ENCODE measurements at regions of chr14 and their contacts with region 1.

Region 1: DNA sequence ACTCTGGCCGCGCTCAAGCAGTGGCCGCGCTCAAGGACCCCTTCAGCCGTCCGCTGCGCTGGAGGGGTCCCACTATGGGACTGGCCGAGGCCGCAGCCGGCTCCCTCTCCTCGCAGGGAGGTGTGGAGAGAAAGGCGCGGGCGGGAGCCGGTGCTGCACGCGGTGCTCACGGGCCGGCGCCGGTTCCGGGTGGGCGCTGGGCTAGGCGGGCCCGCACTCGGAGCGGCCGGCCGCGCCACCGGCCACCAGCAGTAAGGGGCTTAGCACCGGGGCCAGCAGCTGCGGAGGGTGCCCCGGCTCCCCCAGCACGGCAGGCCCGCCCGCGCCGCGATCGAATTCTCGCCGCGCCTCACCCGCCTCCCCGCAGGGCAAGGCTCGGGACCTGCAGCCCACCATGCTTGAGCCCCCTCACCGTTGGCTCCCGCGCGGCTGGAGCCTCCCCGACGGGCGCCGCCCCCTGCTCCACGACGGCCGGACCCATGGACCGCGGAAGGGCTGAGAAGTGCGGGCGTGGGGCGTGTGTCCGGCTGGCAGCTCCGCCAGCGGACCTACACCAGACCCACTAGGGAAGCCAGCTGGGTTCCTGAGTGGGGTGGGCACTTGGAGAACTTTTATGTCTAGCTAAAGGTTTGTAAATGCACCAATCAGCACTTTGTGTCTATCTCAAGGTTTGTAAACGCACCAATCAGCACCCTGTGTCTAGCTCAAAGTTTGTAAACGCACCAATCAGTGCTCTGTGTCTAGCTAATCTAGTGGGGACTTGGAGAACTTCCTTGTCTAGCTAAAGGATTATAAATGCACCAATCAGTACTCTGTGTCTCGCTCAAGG is 49.5 kb downstream of the KLHL28 start:
- DNase-seq: no peak
- H3K4me3 ChIP-seq: peak overlapping the region in 2 of 3 experiments; percentile 34 to 35
- H3K27ac ChIP-seq: no peak overlapping the region
- H3K4me1 ChIP-seq: no peaks in the 10 kb centered on the region
- H3K27me3 ChIP-seq: peaks cover 3% of the 10 kb centered on the region
- CTCF ChIP-seq: no peak

Region 2: GRCh38 chr14:44803239-44803905 is 108.9 kb before region 1 on chr14:
- CTCF ChIA-PET with region 1: no interaction called
- dilution Hi-C with region 1: no loop called
- in situ Hi-C with region 1: no loop called
- intact Hi-C with region 1: no loop called
- DNase-seq: peak; percentile 46
- H3K4me3 ChIP-seq: no peak overlapping the region
- H3K27ac ChIP-seq: no peak overlapping the region
- H3K4me1 ChIP-seq: no peaks in the 10 kb centered on the region
- H3K27me3 ChIP-seq: no peaks in the 10 kb centered on the region
- CTCF ChIP-seq: peak; percentile 45 to 71

Region 3: GRCh38 chr14:45028107-45028626 is 115.9 kb after region 1 on chr14:
- CTCF ChIA-PET with region 1: no interaction called
- dilution Hi-C with region 1: no loop called
- in situ Hi-C with region 1: no loop called
- intact Hi-C with region 1: no loop called
- DNase-seq: no peak
- H3K4me3 ChIP-seq: no peak overlapping the region
- H3K27ac ChIP-seq: no peak overlapping the region
- H3K4me1 ChIP-seq: no peaks in the 10 kb centered on the region
- H3K27me3 ChIP-seq: no peaks in the 10 kb centered on the region
- CTCF ChIP-seq: no peak

Region 4: GRCh38 chr14:45134051-45134958 is 222.1 kb after region 1 on chr14 and contains the start of gene FKBP3:
- CTCF ChIA-PET with region 1: no interaction called
- dilution Hi-C with region 1: no loop called
- in situ Hi-C with region 1: no loop called
- intact Hi-C with region 1: loop called (anchors 2 kb)
- DNase-seq: peak; percentile 98
- H3K4me3 ChIP-seq: peak within 1 kb of the TSS; percentile 73 to 95 (median 89)
- H3K27ac ChIP-seq: peak within 1 kb of the TSS; percentile 73
- H3K4me1 ChIP-seq: peaks cover 13% of the 10 kb centered on the region
- H3K27me3 ChIP-seq: no peaks in the 10 kb centered on the region
- CTCF ChIP-seq: peak in 1 of 2 donors; percentile 39
- total RNA-seq, gene FKBP3: 21.0 to 62.8 TPM

Region 5: DNA sequence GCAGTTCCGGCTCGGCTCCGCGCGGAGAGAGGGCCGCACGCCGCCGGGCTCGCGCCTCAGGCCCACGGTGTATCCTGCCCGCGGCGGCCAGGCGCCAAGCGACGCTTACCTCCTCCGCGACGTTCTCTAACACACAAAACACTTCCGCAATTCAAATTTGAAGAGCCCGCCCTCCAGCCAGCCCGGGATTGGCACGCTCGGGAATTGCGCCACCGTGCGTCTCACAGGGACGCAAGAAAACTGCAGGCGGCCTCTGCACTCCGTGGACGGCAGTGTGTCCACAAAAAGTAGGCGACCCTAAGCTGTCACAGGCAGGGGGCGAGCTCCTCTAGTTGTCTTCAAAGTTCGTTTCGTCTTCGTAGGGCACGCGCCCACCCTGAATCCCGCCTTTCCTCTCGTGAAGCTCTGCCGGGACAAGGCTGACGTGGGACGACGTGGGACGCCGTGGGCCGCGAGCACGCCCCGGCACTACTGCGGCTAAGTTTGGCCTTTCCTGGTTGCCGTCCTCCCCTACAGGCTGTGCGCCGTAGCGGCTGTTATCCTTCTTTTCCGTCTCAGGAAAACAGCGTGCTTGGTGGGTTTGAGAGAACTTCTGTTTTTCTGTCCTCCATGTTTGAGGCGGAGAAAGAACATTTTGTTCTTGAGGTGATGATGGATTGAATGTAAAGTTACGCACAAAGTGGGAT is 341.0 kb after region 1 on chr14 and contains the start of gene MIS18BP1:
- CTCF ChIA-PET with region 1: no interaction called
- dilution Hi-C with region 1: no loop called
- in situ Hi-C with region 1: loop called in 1 of 2 experiments (anchors 10 kb)
- intact Hi-C with region 1: loop called (anchors 5 kb)
- DNase-seq: peak; percentile 97
- H3K4me3 ChIP-seq: peak within 1 kb of the TSS; percentile 69 to 98 (median 94)
- H3K27ac ChIP-seq: peak within 1 kb of the TSS; percentile 81
- H3K4me1 ChIP-seq: peaks cover 18% of the 10 kb centered on the region
- H3K27me3 ChIP-seq: no peaks in the 10 kb centered on the region
- CTCF ChIP-seq: peak; percentile 48 to 68
- total RNA-seq, gene MIS18BP1: 22.5 to 25.8 TPM

Region 6: GRCh38 chr14:45426670-45427282 is 514.5 kb after region 1 on chr14:
- CTCF ChIA-PET with region 1: no interaction called
- dilution Hi-C with region 1: no loop called
- in situ Hi-C with region 1: no loop called
- intact Hi-C with region 1: loop called (anchors 2 kb)
- DNase-seq: peak; percentile 49
- H3K4me3 ChIP-seq: no peak overlapping the region
- H3K27ac ChIP-seq: no peak overlapping the region
- H3K4me1 ChIP-seq: no peaks in the 10 kb centered on the region
- H3K27me3 ChIP-seq: no peaks in the 10 kb centered on the region
- CTCF ChIP-seq: peak; percentile 47 to 67

Region 7: GRCh38 chr14:45810152-45810872 is 898.1 kb after region 1 on chr14:
- CTCF ChIA-PET with region 1: no interaction called
- dilution Hi-C with region 1: no loop called
- in situ Hi-C with region 1: no loop called
- intact Hi-C with region 1: loop called (anchors 10 kb)
- DNase-seq: no peak
- H3K4me3 ChIP-seq: no peak overlapping the region
- H3K27ac ChIP-seq: no peak overlapping the region
- H3K4me1 ChIP-seq: peaks cover 7% of the 10 kb centered on the region
- H3K27me3 ChIP-seq: no peaks in the 10 kb centered on the region
- CTCF ChIP-seq: peak; percentile 45 to 62

Measured in mammary epithelial cell (primary cell).